Activated CD8-positive, alpha-beta memory T cell treated with anti-CD3 and anti-CD28 coated beads, Interleukin-2, amount 10 ng/mL, durations not matched to agents 7 days and 5 days (primary cell): ENCODE measurements at regions of chr17 and their contacts with region 1.

Region 1: GRCh38 chr17:47882247-47882646 is 13.8 kb upstream of the SP2 start:
- DNase-seq: no peak
- ATAC-seq: no peak
- H3K4me3 Mint-ChIP-seq: no peak overlapping the region
- H3K27ac Mint-ChIP-seq: no peak overlapping the region
- H3K4me1 Mint-ChIP-seq: peaks cover 7% of the 10 kb centered on the region
- H3K27me3 Mint-ChIP-seq: peaks cover 23% of the 10 kb centered on the region

Region 2: DNA sequence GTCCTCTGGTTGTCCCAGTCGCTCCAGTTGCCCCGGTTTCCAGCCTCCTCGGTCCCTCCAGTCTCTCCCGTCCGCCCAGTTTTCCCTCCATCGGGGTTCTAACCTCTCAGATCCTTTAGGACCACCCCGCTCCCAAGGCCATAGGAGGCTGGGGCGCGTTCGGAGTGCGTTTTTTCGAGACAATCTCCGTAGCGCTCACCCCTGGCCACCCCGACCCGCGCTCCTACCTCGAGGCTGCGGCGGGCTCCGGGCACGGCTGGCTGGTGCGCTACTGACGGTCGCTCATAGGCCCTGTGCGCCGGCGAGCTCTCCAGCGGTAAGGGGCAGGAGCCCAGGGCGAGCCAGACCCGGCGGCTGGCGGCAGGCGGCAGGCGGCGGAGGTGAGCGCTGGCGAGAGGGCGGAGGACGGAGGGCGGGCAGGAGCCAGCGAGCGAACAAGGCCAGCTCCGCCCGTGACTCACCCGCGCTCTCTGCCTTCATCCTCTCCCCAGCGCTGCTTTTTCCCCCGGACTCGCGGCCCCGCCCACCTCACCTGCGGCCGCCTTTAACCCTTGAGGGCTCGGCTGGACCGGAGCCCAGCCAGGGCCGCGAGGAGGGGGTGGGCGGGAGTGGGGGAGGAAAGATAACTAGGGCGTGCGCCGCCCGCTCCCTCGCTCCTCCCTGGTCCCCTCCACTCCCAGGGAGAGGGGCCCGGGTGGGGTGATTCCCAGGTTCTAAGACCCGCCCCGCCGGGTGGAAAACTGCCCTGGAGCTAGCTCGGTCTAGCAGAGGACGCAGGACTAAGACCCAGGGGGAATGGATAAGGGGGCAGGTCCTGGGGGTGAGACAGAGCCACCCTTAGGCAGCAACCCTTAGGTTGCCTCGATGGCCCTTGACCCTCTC is 31.3 kb before region 1 on chr17 and contains the start of gene SP6:
- CTCF ChIA-PET with region 1: interaction called, 11 read pairs
- DNase-seq: peak; percentile 70
- ATAC-seq: peak; percentile 89
- H3K4me3 Mint-ChIP-seq: no peak within 1 kb of the TSS
- H3K27ac Mint-ChIP-seq: no peak within 1 kb of the TSS
- H3K4me1 Mint-ChIP-seq: peaks cover 13% of the 10 kb centered on the region
- H3K27me3 Mint-ChIP-seq: peaks cover 90% of the 10 kb centered on the region
- total RNA-seq, gene SP6: 0.12 TPM in 1 of 2 experiments, not detected in the other

Region 3: GRCh38 chr17:47949136-47949759 is 67.0 kb after region 1 on chr17:
- CTCF ChIA-PET with region 1: no interaction called
- DNase-seq: peak; percentile 90
- ATAC-seq: peak; percentile 80
- H3K4me3 Mint-ChIP-seq: peak overlapping the region; percentile 55
- H3K27ac Mint-ChIP-seq: peak overlapping the region; percentile 78
- H3K4me1 Mint-ChIP-seq: peaks cover 40% of the 10 kb centered on the region
- H3K27me3 Mint-ChIP-seq: no peaks in the 10 kb centered on the region